ENCODE measurements at regions of chr1 and their contacts with region 1.

Region 1: DNA sequence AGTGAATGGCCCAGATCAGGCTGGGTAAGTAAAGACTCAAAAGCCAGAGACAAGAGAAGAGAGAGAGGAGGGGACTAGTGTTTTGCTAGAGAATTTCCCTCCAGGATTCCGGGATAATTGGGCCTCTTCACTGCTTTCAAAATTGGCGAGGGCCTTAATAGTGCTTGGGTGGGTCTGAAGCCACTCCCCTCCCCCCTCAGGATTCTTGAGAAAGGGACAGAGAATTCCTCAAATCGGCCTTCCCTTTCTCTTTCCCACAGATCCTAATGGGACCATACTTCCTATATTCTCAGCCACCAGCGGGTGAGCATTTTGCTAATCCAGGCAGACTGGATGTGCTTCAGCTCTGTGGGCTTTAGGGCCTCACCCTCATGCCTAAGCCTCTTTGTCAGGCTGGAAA is 11.9 kb downstream of the SFN start:
- DNase-seq: no peak
- ATAC-seq: no peak
- H3K4me3 Mint-ChIP-seq: no peak overlapping the region
- H3K27ac Mint-ChIP-seq: peak overlapping the region; percentile 24
- H3K4me1 Mint-ChIP-seq: peaks cover 6% of the 10 kb centered on the region
- H3K27me3 Mint-ChIP-seq: no peaks in the 10 kb centered on the region

Region 2: DNA sequence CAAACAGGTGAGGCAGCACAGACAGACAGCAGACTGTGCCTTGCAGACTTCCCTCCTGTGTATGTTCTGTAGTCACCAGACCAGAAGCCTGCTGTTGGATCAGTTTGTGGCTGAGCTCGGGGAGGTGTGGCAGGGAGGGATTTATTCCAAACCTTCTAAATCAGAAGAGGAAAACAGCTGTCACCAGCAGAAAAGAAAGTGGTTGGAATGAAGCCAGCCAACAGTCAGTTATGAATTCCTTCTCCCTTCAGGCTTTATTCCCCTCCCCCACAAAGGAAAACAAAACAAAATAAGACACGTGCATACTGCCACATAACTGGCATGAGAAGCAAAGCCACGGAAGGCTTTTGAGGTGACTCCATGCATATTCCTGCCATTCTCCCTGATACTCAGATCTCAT is 106.1 kb before region 1 on chr1:
- CTCF ChIA-PET with region 1: no interaction called
- DNase-seq: no peak
- ATAC-seq: no peak
- H3K4me3 Mint-ChIP-seq: no peak overlapping the region
- H3K27ac Mint-ChIP-seq: no peak overlapping the region
- H3K4me1 Mint-ChIP-seq: peaks cover 22% of the 10 kb centered on the region
- H3K27me3 Mint-ChIP-seq: no peaks in the 10 kb centered on the region

Region 3: DNA sequence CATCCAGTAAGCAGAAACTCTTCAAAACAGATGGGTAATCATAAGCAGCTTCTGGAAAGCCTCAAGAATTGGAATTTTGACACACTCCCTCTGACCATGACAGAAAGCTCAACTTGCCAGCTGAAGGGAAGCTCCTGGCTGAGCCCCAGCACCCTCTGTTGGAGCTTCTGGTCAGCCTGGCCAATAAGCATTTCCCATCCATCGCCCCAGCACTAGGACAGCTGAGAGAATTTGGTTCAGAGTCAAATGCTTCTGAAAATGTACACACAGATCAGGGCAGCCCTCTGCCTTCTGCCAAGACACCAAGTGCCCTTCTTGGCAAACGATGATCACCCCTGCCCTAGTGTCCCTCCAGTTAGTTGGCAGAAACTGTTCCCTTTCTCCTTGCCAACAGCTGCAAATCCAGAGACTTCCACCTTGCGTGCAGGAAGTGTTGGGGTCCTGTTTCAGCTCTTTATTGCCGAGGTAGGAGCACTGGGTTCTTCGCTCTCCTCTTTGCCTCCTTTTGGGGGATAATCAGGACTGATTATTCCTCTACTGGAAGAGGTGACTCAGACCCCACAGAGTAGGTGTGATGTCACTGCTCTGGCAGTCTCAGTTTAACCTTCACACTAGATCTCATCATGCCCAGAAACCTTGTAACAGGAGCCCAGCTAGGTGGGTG is 75.3 kb before region 1 on chr1:
- CTCF ChIA-PET with region 1: no interaction called
- DNase-seq: peak; percentile 63
- ATAC-seq: peak; percentile 76
- H3K4me3 Mint-ChIP-seq: peak overlapping the region; percentile 56
- H3K27ac Mint-ChIP-seq: peak overlapping the region; percentile 97
- H3K4me1 Mint-ChIP-seq: peaks cover 47% of the 10 kb centered on the region
- H3K27me3 Mint-ChIP-seq: no peaks in the 10 kb centered on the region

Region 4: GRCh38 chr1:26856604-26857469 is 18.1 kb before region 1 on chr1:
- CTCF ChIA-PET with region 1: interaction called, 10 read pairs
- DNase-seq: no peak
- ATAC-seq: no peak
- H3K4me3 Mint-ChIP-seq: no peak overlapping the region
- H3K27ac Mint-ChIP-seq: peak overlapping the region; percentile 50
- H3K4me1 Mint-ChIP-seq: peaks cover 3% of the 10 kb centered on the region
- H3K27me3 Mint-ChIP-seq: no peaks in the 10 kb centered on the region

Region 5: DNA sequence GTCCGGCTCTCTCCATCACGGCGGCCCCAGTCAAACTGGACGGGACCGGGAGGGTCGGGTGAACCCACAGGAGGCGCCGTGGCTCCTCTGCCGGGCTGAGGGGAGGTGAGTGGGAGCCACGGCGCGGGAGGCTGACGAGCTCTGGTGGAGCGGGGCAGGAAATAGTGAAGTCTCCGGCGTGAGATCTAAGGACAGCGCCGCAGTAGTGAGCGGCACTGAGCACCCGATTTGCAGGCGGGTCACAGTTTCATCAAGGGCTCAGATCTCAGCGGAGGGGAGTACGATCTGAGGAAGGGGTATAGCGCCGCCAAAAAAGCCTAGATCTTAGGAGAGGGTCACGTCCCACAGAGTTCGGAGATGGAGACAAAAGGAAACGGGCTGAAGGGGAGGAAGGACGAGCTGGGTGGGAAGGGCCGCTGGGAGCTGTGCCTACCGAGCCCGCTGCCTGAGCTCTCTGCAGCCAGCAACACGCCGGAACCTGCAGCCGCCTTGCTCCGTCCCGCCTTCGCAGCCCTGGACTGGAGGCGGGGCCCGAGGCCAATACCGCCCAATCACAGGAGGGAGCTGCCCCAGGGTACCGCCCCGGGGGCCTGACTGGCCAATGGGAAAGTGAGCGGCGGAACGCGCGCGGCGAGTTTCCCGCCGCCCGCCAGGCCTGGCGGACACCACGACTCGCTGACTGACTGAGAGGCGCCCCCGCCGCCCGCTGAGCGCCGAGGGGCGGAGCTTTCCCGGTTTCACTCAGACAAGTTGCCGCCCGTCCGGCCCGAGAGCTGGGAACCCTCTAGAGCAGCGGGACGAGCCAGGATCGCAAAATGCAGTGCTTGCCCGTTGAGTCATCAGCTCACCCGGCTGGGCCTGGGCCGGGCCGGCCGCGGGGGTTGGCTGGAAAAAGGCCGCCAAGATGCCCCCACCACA is 10.0 kb before region 1 on chr1:
- CTCF ChIA-PET with region 1: interaction called, 16 read pairs
- DNase-seq: peak; percentile 97
- ATAC-seq: peak; percentile 95
- H3K4me3 Mint-ChIP-seq: peak overlapping the region; percentile 84
- H3K27ac Mint-ChIP-seq: peak overlapping the region; percentile 87
- H3K4me1 Mint-ChIP-seq: peaks cover 29% of the 10 kb centered on the region
- H3K27me3 Mint-ChIP-seq: no peaks in the 10 kb centered on the region

Region 6: DNA sequence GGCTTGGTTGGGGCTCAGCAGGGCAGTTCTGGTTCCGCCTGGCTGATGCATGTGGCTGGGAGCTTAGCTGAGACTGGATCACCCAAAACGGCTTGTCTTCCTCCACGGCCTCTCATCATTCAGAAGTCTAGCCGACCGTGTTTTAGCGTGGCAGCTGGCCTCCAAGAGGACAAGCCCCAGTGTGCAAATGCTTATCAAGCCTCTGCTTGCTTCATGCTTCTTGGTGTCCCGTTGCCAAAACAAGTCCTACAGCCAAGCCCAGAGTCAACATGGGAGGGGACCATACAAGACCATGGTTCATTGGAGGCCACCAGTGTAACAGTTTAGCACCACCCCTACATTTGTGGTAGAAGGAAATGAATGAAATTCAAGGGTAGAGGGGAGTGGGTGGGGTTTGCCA is 95.9 kb after region 1 on chr1:
- CTCF ChIA-PET with region 1: no interaction called
- DNase-seq: no peak
- ATAC-seq: no peak
- H3K4me3 Mint-ChIP-seq: no peak overlapping the region
- H3K27ac Mint-ChIP-seq: no peak overlapping the region
- H3K4me1 Mint-ChIP-seq: peaks cover 10% of the 10 kb centered on the region
- H3K27me3 Mint-ChIP-seq: peaks cover 14% of the 10 kb centered on the region

Measured in activated CD8-positive, alpha-beta memory T cell treated with anti-CD3 and anti-CD28 coated beads, Interleukin-2, amount 10 ng/mL, durations not matched to agents 7 days and 5 days (primary cell).